Activated T-helper 2 cell treated with anti-CD3 and anti-CD28 coated beads, Interferon-gamma antibody, Interleukin-2, Interleukin-4, amounts not matched to agents 10 μg/mL and 5 μg/mL and 100 μg/mL, durations not matched to agents 14 hours and 24 hours and 36 hours (primary cell): ENCODE measurements at regions of chr17 and their contacts with region 1.

Region 1: GRCh38 chr17:68972119-68972704 is 17.0 kb upstream of the ABCA8 start:
- DNase-seq: no peak
- H3K4me3 Mint-ChIP-seq: no peak overlapping the region
- H3K27ac Mint-ChIP-seq: no peak overlapping the region
- H3K4me1 Mint-ChIP-seq: no peaks in the 10 kb centered on the region
- H3K27me3 Mint-ChIP-seq: no peaks in the 10 kb centered on the region

Region 2: GRCh38 chr17:68771867-68772515 is 200.2 kb before region 1 on chr17:
- intact Hi-C with region 1: loop called (anchors 10 kb)
- DNase-seq: no peak
- H3K4me3 Mint-ChIP-seq: peak overlapping the region; percentile 45
- H3K27ac Mint-ChIP-seq: no peak overlapping the region
- H3K4me1 Mint-ChIP-seq: peaks cover 7% of the 10 kb centered on the region
- H3K27me3 Mint-ChIP-seq: no peaks in the 10 kb centered on the region